ENCODE measurements at regions of chr11 and their contacts with region 1.

Region 1: GRCh38 chr11:57249384-57250319 is 12.6 kb upstream of the APLNR start:
- DNase-seq: no peak
- ATAC-seq: no peak
- H3K4me3 Mint-ChIP-seq: no peak overlapping the region
- H3K27ac Mint-ChIP-seq: no peak overlapping the region
- H3K4me1 Mint-ChIP-seq: peaks cover 3% of the 10 kb centered on the region
- H3K27me3 Mint-ChIP-seq: peaks cover 26% of the 10 kb centered on the region
- CTCF ChIP-seq: no peak

Region 2: DNA sequence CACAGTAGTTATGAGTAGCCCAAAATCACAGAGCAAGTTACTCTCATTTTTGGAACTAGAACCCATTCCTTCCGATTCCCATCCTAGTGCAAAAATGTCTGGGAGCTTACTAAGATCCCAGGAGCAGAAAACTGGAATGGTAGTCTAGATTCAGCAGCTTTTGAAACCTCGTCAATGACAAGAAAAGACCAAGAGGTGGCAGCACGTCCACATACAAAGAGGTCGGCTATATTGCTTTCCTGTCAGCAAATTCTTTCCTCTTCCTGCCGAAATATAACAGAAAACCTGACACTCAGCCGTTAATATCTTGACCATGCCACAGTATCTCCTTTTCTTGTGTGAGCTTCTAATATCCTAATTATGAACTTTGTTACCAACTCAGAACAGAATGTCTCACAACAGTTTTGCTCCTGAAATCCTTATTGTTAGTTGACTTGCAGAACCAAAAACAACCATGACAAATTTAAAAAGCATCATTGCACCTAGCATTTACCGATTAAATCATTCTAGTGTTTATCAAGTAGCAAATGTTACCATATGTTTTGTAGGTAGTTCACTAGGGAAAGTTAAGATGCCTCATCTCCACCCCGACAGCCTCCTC is 408.3 kb before region 1 on chr11:
- CTCF ChIA-PET with region 1: interaction called, 31 read pairs
- POLR2A ChIA-PET with region 1: no interaction called
- intact Hi-C with region 1: no loop called
- DNase-seq: no peak
- ATAC-seq: no peak
- H3K4me3 Mint-ChIP-seq: no peak overlapping the region
- H3K27ac Mint-ChIP-seq: no peak overlapping the region
- H3K4me1 Mint-ChIP-seq: no peaks in the 10 kb centered on the region
- H3K27me3 Mint-ChIP-seq: no peaks in the 10 kb centered on the region
- CTCF ChIP-seq: no peak

Region 3: DNA sequence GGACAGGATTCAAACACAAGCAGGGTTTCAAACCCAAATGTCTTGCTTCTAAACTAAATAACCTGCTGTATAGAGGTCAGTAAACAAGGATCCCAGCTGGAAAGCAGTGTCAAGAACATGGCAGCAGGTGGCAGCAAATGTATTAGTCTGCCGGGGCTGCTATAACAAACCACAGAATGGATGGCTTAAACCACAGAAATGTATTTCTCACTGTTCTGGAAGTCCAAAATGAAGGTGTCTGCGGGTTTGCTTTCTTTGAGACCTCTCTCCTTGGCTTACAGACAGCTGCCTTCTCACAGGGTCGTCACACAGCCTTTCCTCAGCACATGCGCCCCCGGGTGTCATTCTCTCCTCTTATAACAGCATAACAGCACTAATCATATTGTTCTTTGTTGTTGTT is 133.0 kb before region 1 on chr11:
- CTCF ChIA-PET with region 1: interaction called, 13 read pairs
- POLR2A ChIA-PET with region 1: no interaction called
- intact Hi-C with region 1: no loop called
- DNase-seq: no peak
- ATAC-seq: no peak
- H3K4me3 Mint-ChIP-seq: no peak overlapping the region
- H3K27ac Mint-ChIP-seq: no peak overlapping the region
- H3K4me1 Mint-ChIP-seq: no peaks in the 10 kb centered on the region
- H3K27me3 Mint-ChIP-seq: peaks cover 3% of the 10 kb centered on the region
- CTCF ChIP-seq: no peak